ENCODE measurements at regions of chr7 and their contacts with region 1.

Region 1: DNA sequence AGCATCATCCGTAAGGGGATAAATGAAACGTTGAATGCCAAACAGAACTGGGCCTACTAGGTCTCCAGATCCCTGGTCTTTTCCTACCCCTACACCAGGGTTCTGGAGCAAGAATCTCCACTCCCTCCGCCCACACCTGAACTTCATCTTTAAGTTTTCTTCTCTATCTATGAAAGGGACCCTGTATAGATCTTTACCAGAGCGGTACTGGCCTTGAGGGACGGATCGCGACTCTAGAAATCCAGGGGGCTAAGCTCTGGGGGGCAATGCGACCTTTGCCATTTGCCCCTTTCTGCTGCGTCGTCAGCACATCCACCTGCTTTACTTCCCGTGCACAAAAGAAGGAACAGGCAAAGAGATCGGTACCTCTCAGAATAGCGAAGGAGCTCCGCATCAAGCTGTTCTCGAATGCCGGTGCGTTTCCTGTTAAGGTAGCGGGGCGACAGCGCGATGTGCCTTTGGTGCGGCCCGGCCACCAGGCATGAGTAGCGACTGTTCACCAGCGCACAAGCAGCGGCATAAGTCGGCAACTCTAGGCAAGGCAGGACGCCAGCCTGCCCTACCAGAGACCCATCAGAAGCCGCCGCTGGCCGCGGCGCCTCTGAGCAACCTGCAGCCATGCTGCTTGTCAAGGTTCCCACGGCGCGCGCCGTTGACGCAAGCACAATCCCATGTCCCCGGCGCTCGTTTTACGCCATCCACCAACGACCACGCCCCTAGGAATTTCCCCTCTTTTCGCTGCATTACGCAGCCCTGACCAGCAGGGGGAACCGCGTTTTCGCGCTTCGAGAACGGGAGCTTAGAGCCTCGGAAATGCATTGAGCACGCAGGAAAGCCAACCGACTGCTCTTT is at the start of gene POLR1F:
- DNase-seq: peak; percentile 96
- H3K4me3 Mint-ChIP-seq: peak within 1 kb of the TSS; percentile 97
- H3K27ac Mint-ChIP-seq: peak within 1 kb of the TSS; percentile 94
- H3K4me1 Mint-ChIP-seq: peaks cover 38% of the 10 kb centered on the region
- H3K27me3 Mint-ChIP-seq: no peaks in the 10 kb centered on the region
- CTCF ChIP-seq: peak; percentile 85
- total RNA-seq, gene POLR1F: 21.4 and 22.8 TPM in 2 replicates

Region 2: GRCh38 chr7:19698331-19698730 is 10.3 kb before region 1 on chr7:
- CTCF ChIA-PET with region 1: interaction called, 10 read pairs
- POLR2A ChIA-PET with region 1: interaction called, 18 read pairs
- intact Hi-C with region 1: no loop called
- DNase-seq: no peak
- H3K4me3 Mint-ChIP-seq: no peak overlapping the region
- H3K27ac Mint-ChIP-seq: no peak overlapping the region
- H3K4me1 Mint-ChIP-seq: no peaks in the 10 kb centered on the region
- H3K27me3 Mint-ChIP-seq: no peaks in the 10 kb centered on the region
- CTCF ChIP-seq: no peak

Region 3: GRCh38 chr7:19725770-19726169 is 17.1 kb after region 1 on chr7:
- CTCF ChIA-PET with region 1: interaction called, 21 read pairs
- POLR2A ChIA-PET with region 1: no interaction called
- intact Hi-C with region 1: no loop called
- DNase-seq: no peak
- H3K4me3 Mint-ChIP-seq: no peak overlapping the region
- H3K27ac Mint-ChIP-seq: no peak overlapping the region
- H3K4me1 Mint-ChIP-seq: no peaks in the 10 kb centered on the region
- H3K27me3 Mint-ChIP-seq: peaks cover 22% of the 10 kb centered on the region
- CTCF ChIP-seq: no peak